ENCODE measurements at regions of chr11 and their contacts with region 1.

Region 1: DNA sequence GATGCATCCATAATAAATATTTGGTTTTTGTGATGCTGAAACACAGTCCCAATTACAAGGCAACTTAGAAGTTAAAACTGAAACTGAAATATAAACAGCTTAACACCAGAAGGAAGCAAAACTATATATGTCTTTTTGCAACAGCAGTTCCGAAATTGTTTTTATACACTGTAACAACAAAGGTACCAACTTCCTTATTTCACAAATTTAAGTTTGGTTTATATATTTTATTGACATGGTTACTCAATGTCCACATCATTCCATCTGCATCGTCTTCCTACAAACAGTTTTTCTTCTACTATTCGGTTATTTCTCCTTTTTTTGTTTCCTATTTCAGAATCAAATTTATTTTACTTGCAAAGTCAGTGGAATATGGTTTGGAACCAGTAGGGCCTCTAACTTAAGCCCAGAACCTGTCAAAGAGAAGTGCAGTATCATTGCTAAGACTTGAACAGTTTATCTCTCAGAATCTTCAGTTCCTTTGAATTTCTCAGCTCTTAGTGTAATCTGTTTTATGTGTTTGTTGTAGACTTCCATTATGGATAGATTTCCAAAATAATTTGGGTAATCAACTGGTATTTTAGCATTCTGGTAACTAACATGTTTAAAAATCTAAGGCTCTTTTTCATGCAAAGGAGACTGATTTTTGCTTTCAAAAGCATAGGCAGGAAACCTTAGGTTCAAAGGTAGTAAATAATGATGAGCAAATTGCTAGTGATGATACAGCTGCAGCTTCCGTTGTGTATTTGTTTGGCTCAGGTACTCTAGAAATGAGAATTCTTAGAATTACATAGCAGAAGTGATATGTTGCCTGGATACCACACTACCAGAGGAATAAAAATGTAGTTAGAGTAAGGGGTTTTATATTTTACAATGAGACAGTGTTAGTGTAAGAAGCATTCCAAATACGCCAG is 8.2 kb upstream of the HSPA8 start:
- DNase-seq: peak in 3 of 14 experiments; percentile 67 to 87 (median 69)
- ATAC-seq: peak; percentile 87
- H3K4me3 ChIP-seq: peak overlapping the region; percentile 52
- H3K4me3 Mint-ChIP-seq: peak overlapping the region; percentile 90
- H3K27ac ChIP-seq: peak overlapping the region; percentile 87 to 96
- H3K27ac Mint-ChIP-seq: peak overlapping the region; percentile 96
- H3K4me1 ChIP-seq: peaks cover 66% of the 10 kb centered on the region
- H3K4me1 Mint-ChIP-seq: peaks cover 65% of the 10 kb centered on the region
- H3K27me3 ChIP-seq: no peaks in the 10 kb centered on the region
- H3K27me3 Mint-ChIP-seq: no peaks in the 10 kb centered on the region
- CTCF ChIP-seq: no peak

Region 2: GRCh38 chr11:123045101-123045500 is 25.1 kb before region 1 on chr11:
- CTCF ChIA-PET with region 1: no interaction called
- POLR2A ChIA-PET with region 1: no interaction called
- intact Hi-C with region 1: no loop called
- DNase-seq: no peak
- ATAC-seq: no peak
- H3K4me3 ChIP-seq: no peak overlapping the region
- H3K4me3 Mint-ChIP-seq: no peak overlapping the region
- H3K27ac ChIP-seq: no peak overlapping the region
- H3K27ac Mint-ChIP-seq: no peak overlapping the region
- H3K4me1 ChIP-seq: no peaks in the 10 kb centered on the region
- H3K4me1 Mint-ChIP-seq: no peaks in the 10 kb centered on the region
- H3K27me3 ChIP-seq: no peaks in the 10 kb centered on the region
- H3K27me3 Mint-ChIP-seq: no peaks in the 10 kb centered on the region
- CTCF ChIP-seq: no peak

Region 3: DNA sequence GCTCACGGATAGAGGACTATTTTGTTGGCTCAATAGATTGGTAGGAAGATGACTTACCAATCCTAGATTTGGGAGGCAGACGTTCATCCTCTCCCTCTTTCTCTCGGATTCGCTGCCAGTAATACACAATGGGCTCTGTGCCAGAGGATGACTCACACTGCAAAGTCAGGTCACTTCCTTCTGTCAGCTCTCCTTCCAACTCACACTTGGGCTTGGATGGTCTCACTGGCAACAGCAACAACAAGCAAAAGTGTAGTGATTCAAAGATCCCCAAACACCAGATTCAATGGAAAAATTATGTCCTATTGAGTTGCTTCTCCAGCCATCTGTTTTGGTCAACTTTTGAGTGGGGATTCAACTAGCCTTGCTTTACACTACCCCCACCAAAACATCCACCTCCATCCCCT is 13.5 kb after region 1 on chr11:
- CTCF ChIA-PET with region 1: interaction called, 5 read pairs
- POLR2A ChIA-PET with region 1: interaction called, 182 read pairs
- intact Hi-C with region 1: loop called in 1 of 2 experiments (anchors 2 kb)
- DNase-seq: peak; percentile 42 to 90 (median 70)
- ATAC-seq: peak; percentile 35
- H3K4me3 ChIP-seq: no peak overlapping the region
- H3K4me3 Mint-ChIP-seq: peak overlapping the region; percentile 54
- H3K27ac ChIP-seq: peak overlapping the region in 1 of 2 donors; percentile 21
- H3K27ac Mint-ChIP-seq: peak overlapping the region; percentile 79
- H3K4me1 ChIP-seq: peaks cover 53% of the 10 kb centered on the region
- H3K4me1 Mint-ChIP-seq: peaks cover 46% of the 10 kb centered on the region
- H3K27me3 ChIP-seq: no peaks in the 10 kb centered on the region
- H3K27me3 Mint-ChIP-seq: no peaks in the 10 kb centered on the region
- CTCF ChIP-seq: no peak

Measured in CD4-positive, alpha-beta T cell (primary cell).